Mammary epithelial cell (primary cell): ENCODE measurements at regions of chr11 and their contacts with region 1.

Region 1: GRCh38 chr11:121553806-121554205 is 101.0 kb upstream of the SORL1-AS1 start:
- DNase-seq: peak; percentile 63
- H3K4me3 ChIP-seq: no peak overlapping the region
- H3K27ac ChIP-seq: no peak overlapping the region
- H3K4me1 ChIP-seq: peaks cover 49% of the 10 kb centered on the region
- H3K27me3 ChIP-seq: no peaks in the 10 kb centered on the region
- CTCF ChIP-seq: no peak

Region 2: DNA sequence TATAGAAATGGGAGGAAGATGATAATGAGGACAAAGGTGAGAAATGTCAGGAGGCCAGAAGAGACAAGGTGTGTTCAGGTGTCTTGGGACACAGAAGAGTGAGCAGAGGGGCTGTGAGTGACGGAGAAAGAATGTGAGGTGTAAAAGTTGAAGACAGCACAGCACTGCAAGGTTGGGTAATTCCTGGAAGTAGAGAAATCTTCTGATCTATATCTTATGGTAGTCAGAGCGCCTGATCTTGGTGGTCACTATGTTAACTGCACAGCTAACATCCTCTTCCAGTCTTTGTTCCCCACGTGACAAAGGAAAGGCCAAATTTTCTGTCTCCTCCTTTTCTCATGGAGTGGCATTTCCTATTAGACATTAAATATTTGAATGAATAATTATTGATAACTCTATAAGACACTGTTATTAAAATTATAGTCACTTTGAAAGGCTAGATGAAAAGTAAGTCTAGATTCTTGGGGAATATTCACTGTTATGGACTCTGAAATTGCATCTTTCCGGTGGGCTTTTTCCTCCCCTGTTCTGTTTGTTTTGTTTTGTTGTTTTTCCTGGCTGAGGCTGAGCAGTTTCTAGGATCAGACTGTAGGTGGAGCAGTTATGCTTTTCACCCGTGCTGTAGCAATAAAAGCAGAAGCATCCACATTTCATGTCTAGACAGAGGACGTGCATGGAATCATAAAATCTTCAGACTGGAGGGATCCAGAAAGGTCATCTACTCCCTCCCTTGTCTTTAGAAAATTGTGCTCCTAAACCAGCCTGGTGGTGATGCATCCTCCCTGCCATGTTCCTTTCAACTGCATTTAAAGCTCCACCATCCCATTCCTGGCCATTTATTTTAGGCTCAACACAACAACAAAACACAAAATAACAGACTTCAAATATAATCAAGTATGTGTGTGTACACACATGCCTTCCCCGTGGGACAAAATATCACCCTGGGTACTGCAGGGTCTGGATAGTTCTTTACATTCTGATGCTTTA is 234.7 kb before region 1 on chr11:
- CTCF ChIA-PET with region 1: no interaction called
- dilution Hi-C with region 1: no loop called
- in situ Hi-C with region 1: no loop called
- intact Hi-C with region 1: loop called (anchors 1 kb)
- DNase-seq: peak; percentile 49
- H3K4me3 ChIP-seq: no peak overlapping the region
- H3K27ac ChIP-seq: no peak overlapping the region
- H3K4me1 ChIP-seq: peaks cover 4% of the 10 kb centered on the region
- H3K27me3 ChIP-seq: no peaks in the 10 kb centered on the region
- CTCF ChIP-seq: peak; percentile 79 to 89

Region 3: DNA sequence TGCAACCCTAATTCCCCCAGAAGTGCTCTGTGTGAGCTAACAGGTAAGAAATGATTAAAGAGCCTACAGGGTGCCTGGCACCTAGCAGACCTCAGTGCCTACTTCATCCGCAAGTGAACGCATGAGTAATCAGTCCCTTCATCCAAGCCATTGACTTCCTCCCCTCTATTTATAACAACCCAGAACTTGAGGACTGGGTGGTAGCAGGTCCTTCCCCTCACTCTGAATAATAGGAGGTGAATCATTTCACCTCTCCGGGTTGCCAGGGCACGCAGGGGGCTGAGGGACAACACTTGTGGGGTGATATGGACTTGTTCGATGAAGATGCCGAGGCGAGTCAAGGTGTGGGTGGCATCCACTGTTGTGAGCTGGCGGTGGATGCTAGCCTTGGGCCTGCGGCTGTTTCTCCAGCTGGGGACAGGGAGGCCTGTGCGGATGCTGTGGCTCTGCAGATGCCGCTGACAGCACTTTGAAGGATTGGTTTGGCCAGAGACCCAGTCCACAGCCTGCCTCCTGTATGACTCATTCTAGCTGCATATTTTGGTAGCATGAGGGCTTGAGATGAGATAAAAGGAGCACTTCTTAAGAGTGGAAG is 89.4 kb before region 1 on chr11:
- CTCF ChIA-PET with region 1: no interaction called
- dilution Hi-C with region 1: no loop called
- in situ Hi-C with region 1: loop called in 1 of 2 experiments (anchors 10 kb)
- intact Hi-C with region 1: loop called (anchors 1 kb)
- DNase-seq: peak; percentile 92
- H3K4me3 ChIP-seq: no peak overlapping the region
- H3K27ac ChIP-seq: peak overlapping the region; percentile 87
- H3K4me1 ChIP-seq: peaks cover 50% of the 10 kb centered on the region
- H3K27me3 ChIP-seq: no peaks in the 10 kb centered on the region
- CTCF ChIP-seq: no peak

Region 4: DNA sequence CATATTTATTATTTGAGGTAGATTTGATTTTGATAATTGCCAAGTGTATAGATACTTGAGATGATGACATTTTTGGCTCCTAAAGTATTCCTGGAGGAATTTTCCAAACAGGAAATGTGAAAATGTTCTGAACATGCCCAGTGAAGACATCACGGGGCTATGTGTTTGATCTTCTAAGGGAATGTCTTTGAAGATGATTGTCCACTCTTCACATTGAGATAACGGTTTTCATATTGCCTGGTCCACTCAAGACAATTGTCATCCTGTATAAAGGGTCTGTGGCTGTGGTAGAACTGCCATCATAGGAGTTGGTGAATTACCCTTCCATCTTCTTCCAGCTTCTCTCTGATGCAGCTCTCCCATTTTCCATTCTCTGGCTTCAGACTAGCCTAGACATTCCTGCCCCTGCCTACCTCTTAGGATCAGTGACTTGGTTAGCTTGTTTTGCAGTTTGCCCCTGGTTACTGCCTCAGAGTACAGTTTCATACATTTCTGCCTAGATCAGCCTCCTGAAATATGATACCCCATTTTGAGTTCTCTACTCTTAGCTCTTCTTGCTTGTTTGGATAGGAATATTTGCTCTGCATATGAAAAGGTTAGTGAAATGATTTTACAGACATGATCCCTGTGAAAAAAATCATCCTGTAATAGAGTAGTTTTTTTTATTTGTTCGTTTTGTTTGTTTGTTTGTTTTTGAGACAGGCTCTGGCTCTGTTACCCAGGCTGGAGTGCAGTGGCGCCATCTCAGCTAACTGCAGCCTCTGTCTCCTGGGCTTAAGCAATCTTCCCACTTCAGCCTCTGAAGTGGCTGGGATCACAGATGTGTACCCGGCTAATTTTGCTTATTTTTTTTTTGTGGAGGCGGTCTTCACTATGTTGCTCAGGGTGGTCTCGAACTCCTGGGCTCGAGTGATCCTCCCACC is 10.4 kb after region 1 on chr11:
- CTCF ChIA-PET with region 1: no interaction called
- dilution Hi-C with region 1: no loop called
- in situ Hi-C with region 1: no loop called
- intact Hi-C with region 1: loop called (anchors 1 kb)
- DNase-seq: no peak
- H3K4me3 ChIP-seq: no peak overlapping the region
- H3K27ac ChIP-seq: no peak overlapping the region
- H3K4me1 ChIP-seq: no peaks in the 10 kb centered on the region
- H3K27me3 ChIP-seq: no peaks in the 10 kb centered on the region
- CTCF ChIP-seq: no peak